WTC11 (cell line): ENCODE measurements at regions of chr11 and their contacts with region 1.

Region 1: GRCh38 chr11:68257475-68258362 is 14.1 kb downstream of the C11orf24 start:
- DNase-seq: peak; percentile 99
- ATAC-seq: peak; percentile 92
- H3K4me3 Mint-ChIP-seq: no peak overlapping the region
- H3K27ac Mint-ChIP-seq: no peak overlapping the region
- H3K4me1 Mint-ChIP-seq: peaks cover 12% of the 10 kb centered on the region
- H3K27me3 Mint-ChIP-seq: peaks cover 9% of the 10 kb centered on the region
- CTCF ChIP-seq: peak; percentile 79

Region 2: DNA sequence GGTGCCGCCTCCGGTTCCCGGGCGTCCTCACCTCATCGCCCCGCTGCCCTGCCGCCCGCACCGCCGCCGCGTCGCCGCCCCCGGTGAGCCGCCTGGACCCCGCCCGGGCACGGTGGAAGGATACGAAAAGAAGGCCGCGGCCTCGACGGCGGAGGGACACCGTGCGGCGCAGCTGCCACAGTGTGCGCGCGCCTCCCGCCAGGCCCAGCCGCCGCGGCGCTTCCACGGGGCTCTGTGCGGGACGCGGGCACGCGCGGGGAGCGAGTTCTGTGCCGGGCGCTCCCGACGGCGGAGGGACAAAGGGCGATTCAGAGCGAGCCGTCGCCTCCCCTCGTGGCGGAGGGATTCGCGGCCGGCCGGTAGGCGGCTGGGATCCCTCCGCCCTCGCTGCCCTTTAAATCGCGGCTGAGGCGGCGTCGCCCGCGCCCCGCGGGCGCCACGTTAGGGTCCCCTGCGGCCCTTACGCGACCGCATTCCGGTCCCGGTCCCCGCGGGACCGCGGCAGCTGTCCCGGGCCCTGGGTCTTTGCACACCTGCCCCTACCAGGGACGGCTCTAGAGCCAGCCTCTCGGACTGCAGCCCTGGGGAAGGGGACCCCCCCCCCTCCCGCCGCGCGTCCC is 44.1 kb before region 1 on chr11:
- CTCF ChIA-PET with region 1: interaction called, 13 read pairs
- POLR2A ChIA-PET with region 1: no interaction called
- DNase-seq: peak; percentile 78
- ATAC-seq: peak; percentile 9
- H3K4me3 Mint-ChIP-seq: peak overlapping the region; percentile 57
- H3K27ac Mint-ChIP-seq: no peak overlapping the region
- H3K4me1 Mint-ChIP-seq: peaks cover 44% of the 10 kb centered on the region
- H3K27me3 Mint-ChIP-seq: peaks cover 9% of the 10 kb centered on the region
- CTCF ChIP-seq: no peak

Region 3: GRCh38 chr11:68271781-68272608 is 14.3 kb after region 1 on chr11 and contains the start of gene C11orf24:
- CTCF ChIA-PET with region 1: interaction called, 23 read pairs
- POLR2A ChIA-PET with region 1: interaction called, 3 read pairs
- DNase-seq: peak; percentile 93
- ATAC-seq: peak; percentile 92
- H3K4me3 Mint-ChIP-seq: peak within 1 kb of the TSS; percentile 98
- H3K27ac Mint-ChIP-seq: peak within 1 kb of the TSS; percentile 99
- H3K4me1 Mint-ChIP-seq: peaks cover 21% of the 10 kb centered on the region
- H3K27me3 Mint-ChIP-seq: no peaks in the 10 kb centered on the region
- CTCF ChIP-seq: no peak
- total RNA-seq, gene C11orf24: 41.8 to 53.7 TPM (median 43.8 TPM) in 3 replicates

Region 4: DNA sequence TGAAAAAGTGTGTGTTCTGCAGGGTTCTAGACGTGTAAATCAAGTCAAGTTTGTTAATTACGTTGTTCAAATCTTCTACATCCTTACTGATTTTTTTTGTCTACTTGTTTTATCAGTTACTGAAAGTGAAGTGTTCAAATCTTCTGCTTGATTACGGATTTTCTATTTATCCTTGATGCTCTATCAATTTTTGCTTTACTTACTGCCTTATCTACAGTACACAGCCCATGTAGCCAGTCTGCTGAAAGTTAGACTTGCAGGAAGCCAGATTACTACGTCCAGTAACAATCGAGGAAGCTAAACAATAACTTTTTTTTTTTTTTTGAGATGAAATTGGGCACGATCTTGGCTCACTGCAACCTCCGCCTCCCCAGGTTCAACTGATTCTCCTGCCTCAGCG is 29.7 kb after region 1 on chr11:
- CTCF ChIA-PET with region 1: no interaction called
- POLR2A ChIA-PET with region 1: no interaction called
- DNase-seq: no peak
- ATAC-seq: no peak
- H3K4me3 Mint-ChIP-seq: no peak overlapping the region
- H3K27ac Mint-ChIP-seq: no peak overlapping the region
- H3K4me1 Mint-ChIP-seq: no peaks in the 10 kb centered on the region
- H3K27me3 Mint-ChIP-seq: peaks cover 14% of the 10 kb centered on the region
- CTCF ChIP-seq: no peak

Region 5: DNA sequence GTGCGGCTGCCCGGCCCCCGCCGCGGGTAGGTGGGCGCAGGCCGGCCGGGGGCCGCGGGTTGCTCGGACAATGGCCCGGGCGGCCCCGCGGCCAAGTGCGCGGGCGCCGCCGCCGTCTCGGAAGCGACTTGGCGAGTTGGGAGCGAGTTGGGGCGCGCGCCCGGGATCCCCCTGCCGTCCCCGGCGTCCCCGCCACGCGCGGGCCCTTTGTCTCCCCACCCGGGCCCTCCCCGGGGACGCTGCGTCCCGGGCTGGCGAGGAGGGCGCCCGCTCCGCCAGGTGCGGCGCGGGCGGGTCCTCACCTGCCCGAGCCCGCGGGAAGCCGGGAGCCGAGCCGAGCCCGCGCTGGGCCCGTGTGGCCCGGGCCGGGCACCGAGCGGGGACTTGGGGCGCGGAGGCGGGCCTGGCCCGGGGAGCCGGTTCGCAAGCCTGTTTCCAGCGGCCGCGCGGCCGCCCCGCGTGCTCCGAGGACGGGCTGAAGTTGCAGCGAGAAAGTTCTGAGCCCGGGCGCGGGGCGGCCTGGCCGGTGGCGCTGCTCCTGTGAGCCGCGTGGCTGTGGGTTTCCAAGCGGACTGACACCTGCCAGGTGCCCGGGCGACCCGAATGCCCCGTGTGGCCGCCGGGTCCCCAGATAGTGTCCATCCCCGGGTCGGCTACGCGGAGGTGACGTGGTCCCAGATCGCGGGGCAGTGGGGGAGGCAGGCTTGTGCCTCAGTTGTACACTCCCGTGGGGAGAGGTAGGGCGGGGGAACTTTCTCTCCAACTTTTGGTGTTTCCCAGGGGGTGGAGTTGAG is 55.3 kb after region 1 on chr11:
- CTCF ChIA-PET with region 1: interaction called, 10 read pairs
- POLR2A ChIA-PET with region 1: no interaction called
- DNase-seq: no peak
- ATAC-seq: peak; percentile 7
- H3K4me3 Mint-ChIP-seq: peak overlapping the region; percentile 88
- H3K27ac Mint-ChIP-seq: peak overlapping the region; percentile 97
- H3K4me1 Mint-ChIP-seq: peaks cover 52% of the 10 kb centered on the region
- H3K27me3 Mint-ChIP-seq: peaks cover 5% of the 10 kb centered on the region; the same call in 1 of the 2 replicates
- CTCF ChIP-seq: no peak

Region 6: DNA sequence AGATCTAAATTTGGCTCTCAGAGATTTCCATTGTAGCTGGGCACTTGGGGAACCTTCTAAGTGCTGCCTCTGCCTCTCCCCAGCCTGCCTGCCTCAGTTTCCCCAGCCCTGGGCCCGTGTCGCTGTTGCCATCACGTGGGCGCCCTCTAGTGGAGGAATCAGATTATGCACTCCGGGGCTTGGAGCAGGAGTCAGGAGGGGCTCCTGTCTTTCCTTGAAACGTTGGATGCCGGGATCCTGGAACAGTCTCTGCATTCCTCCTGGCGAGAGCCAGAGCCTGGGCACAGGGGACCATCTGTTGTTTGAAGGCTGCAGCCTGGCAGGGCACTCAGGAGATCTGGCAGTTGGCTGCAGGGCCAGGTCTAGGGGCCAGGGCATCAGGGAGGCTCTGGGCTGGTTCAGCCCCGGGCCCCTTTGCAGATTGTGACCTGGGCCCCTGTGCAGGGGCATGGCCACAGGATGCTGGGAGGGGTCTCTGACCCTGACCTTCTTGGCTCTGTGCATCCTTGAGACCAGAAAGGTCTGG is 126.3 kb after region 1 on chr11:
- CTCF ChIA-PET with region 1: interaction called, 10 read pairs
- POLR2A ChIA-PET with region 1: no interaction called
- DNase-seq: peak; percentile 92
- ATAC-seq: peak; percentile 67
- H3K4me3 Mint-ChIP-seq: no peak overlapping the region
- H3K27ac Mint-ChIP-seq: no peak overlapping the region
- H3K4me1 Mint-ChIP-seq: peaks cover 5% of the 10 kb centered on the region
- H3K27me3 Mint-ChIP-seq: no peaks in the 10 kb centered on the region
- CTCF ChIP-seq: peak; percentile 97

Region 7: GRCh38 chr11:68632802-68633201 is 375.1 kb after region 1 on chr11:
- CTCF ChIA-PET with region 1: no interaction called
- POLR2A ChIA-PET with region 1: no interaction called
- DNase-seq: peak; percentile 80
- ATAC-seq: peak; percentile 100
- H3K4me3 Mint-ChIP-seq: no peak overlapping the region
- H3K27ac Mint-ChIP-seq: no peak overlapping the region
- H3K4me1 Mint-ChIP-seq: peaks cover 38% of the 10 kb centered on the region
- H3K27me3 Mint-ChIP-seq: no peaks in the 10 kb centered on the region
- CTCF ChIP-seq: peak; percentile 34; the same call in 1 of the 2 replicates